Lower leg skin (tissue), 4 donors: ENCODE measurements at regions of chr3 and their contacts with region 1.

Region 1: GRCh38 chr3:150428562-150428961 is 20.5 kb downstream of the TSC22D2 start:
- DNase-seq: no peak
- H3K4me3 ChIP-seq: no peak overlapping the region
- CTCF ChIP-seq: no peak
- POLR2A ChIP-seq: no peak

Region 2: GRCh38 chr3:150462108-150462507 is 33.5 kb after region 1 on chr3:
- intact Hi-C with region 1: loop called (anchors 5 kb)
- DNase-seq: no peak
- H3K4me3 ChIP-seq: no peak overlapping the region
- CTCF ChIP-seq: no peak
- POLR2A ChIP-seq: no peak